ENCODE measurements at regions of chrX and their contacts with region 1.

Region 1: DNA sequence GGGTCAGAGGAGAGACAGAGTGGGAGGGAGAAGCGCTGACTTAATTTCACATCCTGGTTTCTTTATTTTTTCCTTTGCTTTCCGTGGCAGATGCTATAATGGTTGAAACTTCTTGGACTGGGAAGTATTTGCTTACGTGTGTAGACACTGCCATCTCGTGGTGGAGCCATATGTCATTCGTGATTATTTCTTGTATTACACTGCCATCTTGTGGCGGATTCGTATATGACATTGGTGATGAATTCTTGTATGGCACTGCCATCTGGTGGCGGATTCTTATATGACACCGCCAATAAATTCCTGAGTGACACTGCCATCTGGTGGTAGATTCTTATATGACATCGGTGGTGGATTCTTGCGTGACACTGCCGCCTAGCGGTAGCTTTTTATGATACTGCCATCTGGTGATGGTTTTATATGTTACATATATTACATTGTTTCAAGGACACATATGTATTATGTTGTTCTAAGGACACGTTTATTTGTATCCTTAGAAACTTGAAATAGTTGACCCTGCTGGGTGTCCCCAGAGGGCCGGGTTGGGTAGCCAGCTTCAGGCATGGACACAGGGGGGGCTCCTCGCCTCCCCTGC is 37.3 kb upstream of the CLCN4 start:
- DNase-seq: peak; percentile 77
- H3K4me3 Mint-ChIP-seq: no peak overlapping the region
- H3K27ac Mint-ChIP-seq: peak overlapping the region; percentile 7
- H3K4me1 Mint-ChIP-seq: peaks cover 4% of the 10 kb centered on the region
- H3K27me3 Mint-ChIP-seq: no peaks in the 10 kb centered on the region

Region 2: GRCh38 chrX:9871701-9872268 is 247.7 kb before region 1 on chrX:
- CTCF ChIA-PET with region 1: interaction called, 13 read pairs
- POLR2A ChIA-PET with region 1: no interaction called
- DNase-seq: no peak
- H3K4me3 Mint-ChIP-seq: no peak overlapping the region
- H3K27ac Mint-ChIP-seq: no peak overlapping the region
- H3K4me1 Mint-ChIP-seq: peaks cover 10% of the 10 kb centered on the region
- H3K27me3 Mint-ChIP-seq: peaks cover 27% of the 10 kb centered on the region

Region 3: DNA sequence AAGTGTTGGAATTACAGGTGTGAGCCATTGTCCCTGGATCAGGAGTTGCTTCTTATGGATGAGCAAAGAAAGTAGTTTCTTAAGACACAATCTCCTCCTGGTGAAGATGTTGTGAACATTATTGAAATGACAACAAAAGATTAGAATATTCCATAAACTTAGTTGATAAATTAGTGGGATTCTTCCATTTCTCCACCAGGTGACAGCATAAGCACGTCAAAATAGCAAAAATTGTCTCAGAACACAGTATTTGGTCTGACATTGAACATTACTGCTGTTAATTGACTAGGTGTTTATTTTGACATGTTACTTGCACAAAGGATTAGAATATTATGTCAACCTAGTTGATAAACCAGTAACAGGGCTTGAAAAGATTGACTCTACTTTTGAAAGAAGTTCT is 130.7 kb before region 1 on chrX:
- CTCF ChIA-PET with region 1: interaction called, 33 read pairs
- POLR2A ChIA-PET with region 1: no interaction called
- DNase-seq: no peak
- H3K4me3 Mint-ChIP-seq: no peak overlapping the region
- H3K27ac Mint-ChIP-seq: no peak overlapping the region
- H3K4me1 Mint-ChIP-seq: no peaks in the 10 kb centered on the region
- H3K27me3 Mint-ChIP-seq: peaks cover 2% of the 10 kb centered on the region

Region 4: DNA sequence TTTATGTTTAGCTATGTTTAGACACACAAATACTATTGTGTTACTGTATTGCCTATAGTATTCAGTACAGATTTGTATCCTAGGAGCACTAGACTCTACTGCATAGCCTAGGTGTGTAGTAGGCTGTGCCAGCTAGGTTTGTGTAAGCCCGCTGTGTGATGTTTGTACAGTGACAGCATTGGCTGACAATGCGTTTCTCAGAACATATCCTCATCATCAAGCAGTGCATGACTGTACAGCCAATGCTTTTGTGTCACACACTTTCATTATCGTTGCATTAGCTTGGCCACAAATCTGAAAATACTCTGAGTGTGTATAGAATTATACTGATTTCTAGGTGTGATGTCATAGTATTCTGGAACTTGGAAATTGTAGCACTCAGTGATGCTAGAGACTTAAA is 88.9 kb before region 1 on chrX:
- CTCF ChIA-PET with region 1: interaction called, 12 read pairs
- POLR2A ChIA-PET with region 1: no interaction called
- DNase-seq: no peak
- H3K4me3 Mint-ChIP-seq: no peak overlapping the region
- H3K27ac Mint-ChIP-seq: no peak overlapping the region
- H3K4me1 Mint-ChIP-seq: no peaks in the 10 kb centered on the region
- H3K27me3 Mint-ChIP-seq: no peaks in the 10 kb centered on the region

Region 5: DNA sequence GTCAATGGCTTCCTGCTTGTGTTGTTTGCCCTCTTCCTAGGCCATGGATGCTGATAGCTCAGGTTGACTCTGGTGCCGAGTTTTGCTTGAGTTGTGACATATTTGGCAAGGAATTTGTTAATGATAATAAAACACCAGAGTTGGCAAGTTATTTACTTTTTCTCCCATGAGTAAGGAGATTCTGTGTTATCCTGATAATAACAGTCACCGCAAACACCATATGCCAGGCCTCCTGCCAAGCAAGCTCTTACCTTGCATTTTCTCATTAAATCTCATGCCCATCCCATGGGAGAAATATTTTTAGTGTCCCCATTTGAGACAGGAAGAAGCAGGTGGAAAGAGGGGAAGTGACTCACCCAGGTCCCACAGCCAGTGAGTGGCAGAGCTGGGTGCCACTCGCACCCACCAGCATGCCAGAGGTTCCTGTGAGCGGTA is 30.1 kb before region 1 on chrX:
- CTCF ChIA-PET with region 1: interaction called, 17 read pairs
- POLR2A ChIA-PET with region 1: no interaction called
- DNase-seq: no peak
- H3K4me3 Mint-ChIP-seq: no peak overlapping the region
- H3K27ac Mint-ChIP-seq: no peak overlapping the region
- H3K4me1 Mint-ChIP-seq: peaks cover 24% of the 10 kb centered on the region
- H3K27me3 Mint-ChIP-seq: no peaks in the 10 kb centered on the region

Region 6: DNA sequence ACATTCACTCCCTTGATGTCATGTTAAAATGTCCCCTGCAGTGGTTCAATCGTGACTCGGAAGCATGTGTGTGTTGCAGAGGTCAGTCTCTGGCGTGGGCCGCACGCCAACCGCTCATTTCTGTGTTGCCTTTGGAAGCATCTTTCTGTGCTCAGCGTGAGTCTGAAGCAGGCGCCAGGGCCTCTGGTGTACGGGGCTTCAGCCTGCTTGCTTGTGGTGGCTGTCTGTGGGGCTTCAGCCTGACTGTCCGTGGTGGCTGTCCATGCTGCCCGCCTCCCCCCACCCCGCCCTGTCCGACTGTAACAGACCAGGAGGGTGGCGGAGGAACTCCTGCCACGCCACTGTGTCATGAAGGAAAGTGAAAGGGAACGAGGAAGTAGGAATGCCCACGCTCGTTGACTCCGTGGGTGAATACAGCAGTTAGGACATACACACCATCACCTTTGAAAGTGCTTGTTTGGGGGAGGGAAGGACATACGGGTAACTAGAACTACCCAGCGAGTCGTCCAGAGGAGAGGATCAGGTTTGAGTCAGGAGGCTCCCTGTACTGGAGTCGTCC is 22.6 kb after region 1 on chrX:
- CTCF ChIA-PET with region 1: interaction called, 11 read pairs
- POLR2A ChIA-PET with region 1: no interaction called
- DNase-seq: no peak
- H3K4me3 Mint-ChIP-seq: no peak overlapping the region
- H3K27ac Mint-ChIP-seq: no peak overlapping the region
- H3K4me1 Mint-ChIP-seq: no peaks in the 10 kb centered on the region
- H3K27me3 Mint-ChIP-seq: no peaks in the 10 kb centered on the region

Region 7: DNA sequence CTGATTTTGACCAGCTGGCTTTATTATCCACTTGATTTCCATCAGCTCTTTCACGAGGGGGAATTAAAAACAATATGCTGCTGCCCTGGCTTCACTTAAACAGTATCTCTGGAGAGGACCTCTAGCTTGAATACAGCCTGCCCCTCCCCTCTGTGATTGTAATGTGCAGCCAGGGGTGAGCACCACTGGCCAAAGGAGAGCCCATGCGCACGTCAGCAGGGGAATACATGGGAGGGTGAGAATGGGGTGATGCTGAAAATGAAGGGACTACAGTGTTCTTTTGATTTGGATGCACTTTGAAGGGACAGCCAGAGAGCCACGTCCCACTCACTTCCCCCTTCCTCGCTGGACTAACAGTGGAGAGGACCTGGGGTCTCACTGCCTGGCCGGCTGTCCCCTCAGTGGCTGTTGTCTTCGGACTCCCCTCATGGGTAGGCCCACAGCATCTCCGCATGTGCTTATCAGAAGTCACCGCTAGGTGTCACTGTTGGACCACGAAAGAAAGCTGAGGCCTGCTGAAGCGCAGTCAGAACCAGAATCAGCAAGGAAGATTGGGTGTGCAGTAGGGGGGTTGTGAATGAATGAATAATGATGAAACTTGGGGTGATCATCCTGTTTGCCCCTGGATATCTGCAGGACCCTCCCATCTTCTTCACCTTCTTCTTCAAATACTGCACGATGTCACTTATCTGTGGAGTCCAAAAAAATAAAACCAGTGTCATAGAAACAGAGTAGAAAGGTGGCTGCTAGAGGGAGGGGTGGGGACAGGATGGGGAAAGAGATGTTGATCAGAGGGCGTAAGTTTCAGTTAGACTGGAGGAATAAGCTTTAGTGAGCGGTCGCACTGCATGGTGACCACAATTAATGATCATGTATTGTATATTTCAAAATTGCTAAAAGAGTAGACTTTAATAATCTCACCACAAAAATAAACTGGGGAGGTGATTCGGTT is 70.1 kb after region 1 on chrX:
- CTCF ChIA-PET with region 1: no interaction called
- POLR2A ChIA-PET with region 1: no interaction called
- DNase-seq: peak; percentile 66
- H3K4me3 Mint-ChIP-seq: no peak overlapping the region
- H3K27ac Mint-ChIP-seq: no peak overlapping the region
- H3K4me1 Mint-ChIP-seq: no peaks in the 10 kb centered on the region
- H3K27me3 Mint-ChIP-seq: peaks cover 3% of the 10 kb centered on the region